Body of pancreas (tissue), 4 donors: ENCODE measurements at regions of chrX and their contacts with region 1.

Region 1: DNA sequence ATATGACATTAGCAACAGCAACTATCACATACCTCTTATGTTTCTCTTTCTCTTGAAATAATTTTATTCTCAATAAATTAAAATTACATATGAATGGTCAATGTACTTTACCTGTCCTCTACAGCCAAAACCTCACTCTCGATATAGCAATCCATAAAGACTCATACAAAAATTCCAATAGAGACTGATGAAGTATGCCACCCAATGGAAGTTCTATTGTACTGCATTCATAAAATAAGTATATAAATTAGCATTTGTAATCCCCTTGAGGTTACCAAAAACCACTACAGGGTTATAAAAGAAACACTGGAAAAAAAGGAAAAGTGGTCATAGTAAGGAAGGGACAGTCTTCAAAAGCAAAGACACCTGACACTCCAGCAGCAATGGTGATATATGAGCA is 32.8 kb downstream of the CLDN2 start:
- DNase-seq: no peak
- ATAC-seq: no peak
- H3K4me3 ChIP-seq: no peak overlapping the region
- H3K27ac ChIP-seq: no peak overlapping the region
- H3K4me1 ChIP-seq: peaks cover 4% of the 10 kb centered on the region
- H3K27me3 ChIP-seq: no peaks in the 10 kb centered on the region
- CTCF ChIP-seq: peak; percentile 18 to 59 (median 52)
- POLR2A ChIP-seq: no peak

Region 2: DNA sequence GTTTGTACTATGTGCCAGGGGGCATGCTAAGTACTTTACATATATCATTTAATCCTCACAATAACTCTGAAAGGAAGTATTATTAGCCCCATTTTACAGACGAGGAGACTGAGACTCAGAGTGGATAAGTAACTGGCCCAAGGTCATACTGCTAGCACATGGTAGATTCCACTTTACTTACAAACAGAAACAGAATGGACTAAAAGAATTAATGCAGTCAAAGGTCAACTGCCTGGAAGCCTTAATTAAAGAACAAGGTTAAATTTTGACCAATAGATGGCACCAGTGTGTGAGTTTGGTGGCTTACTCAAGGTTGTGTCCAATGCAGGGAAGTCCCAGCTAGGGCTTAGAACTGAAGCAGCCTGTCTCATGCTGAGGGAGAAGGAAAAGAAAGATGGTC is 54.5 kb before region 1 on chrX:
- intact Hi-C with region 1: loop called (anchors 5 kb)
- DNase-seq: peak in 3 of 4 donors; percentile 37 to 46 (median 37)
- ATAC-seq: peak; percentile 70
- H3K4me3 ChIP-seq: no peak overlapping the region
- H3K27ac ChIP-seq: no peak overlapping the region
- H3K4me1 ChIP-seq: peaks cover 34% of the 10 kb centered on the region
- H3K27me3 ChIP-seq: no peaks in the 10 kb centered on the region
- CTCF ChIP-seq: peak in 4 of 7 experiments; percentile 49 to 64 (median 56)
- POLR2A ChIP-seq: no peak